Activated CD4-positive, alpha-beta T cell treated with anti-CD3 and anti-CD28 coated beads, Interleukin-2, amount 10 ng/mL, durations not matched to agents 24 days and 14 days (primary cell): ENCODE measurements at regions of chr16 and their contacts with region 1.

Region 1: GRCh38 chr16:70251629-70252354 is at the start of gene EXOSC6:
- DNase-seq: peak; percentile 98
- H3K4me3 Mint-ChIP-seq: peak within 1 kb of the TSS; percentile 91
- H3K27ac Mint-ChIP-seq: peak within 1 kb of the TSS; percentile 96
- H3K4me1 Mint-ChIP-seq: peaks cover 15% of the 10 kb centered on the region
- H3K27me3 Mint-ChIP-seq: no peaks in the 10 kb centered on the region
- total RNA-seq, gene EXOSC6: 38.0 and 39.2 TPM in 2 replicates

Region 2: GRCh38 chr16:70289229-70290098 is 37.7 kb after region 1 on chr16 and contains the start of gene AARS1:
- intact Hi-C with region 1: loop called (anchors 5 kb)
- DNase-seq: peak; percentile 99
- H3K4me3 Mint-ChIP-seq: peak within 1 kb of the TSS; percentile 99
- H3K27ac Mint-ChIP-seq: peak within 1 kb of the TSS; percentile 99
- H3K4me1 Mint-ChIP-seq: peaks cover 22% of the 10 kb centered on the region
- H3K27me3 Mint-ChIP-seq: peaks cover 2% of the 10 kb centered on the region
- total RNA-seq, gene AARS1: 115 and 117 TPM in 2 replicates

Region 3: GRCh38 chr16:70331588-70332358 is 80.0 kb after region 1 on chr16:
- intact Hi-C with region 1: no loop called
- DNase-seq: peak; percentile 65
- H3K4me3 Mint-ChIP-seq: no peak overlapping the region
- H3K27ac Mint-ChIP-seq: no peak overlapping the region
- H3K4me1 Mint-ChIP-seq: no peaks in the 10 kb centered on the region
- H3K27me3 Mint-ChIP-seq: no peaks in the 10 kb centered on the region